ENCODE measurements at regions of chr2 and their contacts with region 1.

Region 1: DNA sequence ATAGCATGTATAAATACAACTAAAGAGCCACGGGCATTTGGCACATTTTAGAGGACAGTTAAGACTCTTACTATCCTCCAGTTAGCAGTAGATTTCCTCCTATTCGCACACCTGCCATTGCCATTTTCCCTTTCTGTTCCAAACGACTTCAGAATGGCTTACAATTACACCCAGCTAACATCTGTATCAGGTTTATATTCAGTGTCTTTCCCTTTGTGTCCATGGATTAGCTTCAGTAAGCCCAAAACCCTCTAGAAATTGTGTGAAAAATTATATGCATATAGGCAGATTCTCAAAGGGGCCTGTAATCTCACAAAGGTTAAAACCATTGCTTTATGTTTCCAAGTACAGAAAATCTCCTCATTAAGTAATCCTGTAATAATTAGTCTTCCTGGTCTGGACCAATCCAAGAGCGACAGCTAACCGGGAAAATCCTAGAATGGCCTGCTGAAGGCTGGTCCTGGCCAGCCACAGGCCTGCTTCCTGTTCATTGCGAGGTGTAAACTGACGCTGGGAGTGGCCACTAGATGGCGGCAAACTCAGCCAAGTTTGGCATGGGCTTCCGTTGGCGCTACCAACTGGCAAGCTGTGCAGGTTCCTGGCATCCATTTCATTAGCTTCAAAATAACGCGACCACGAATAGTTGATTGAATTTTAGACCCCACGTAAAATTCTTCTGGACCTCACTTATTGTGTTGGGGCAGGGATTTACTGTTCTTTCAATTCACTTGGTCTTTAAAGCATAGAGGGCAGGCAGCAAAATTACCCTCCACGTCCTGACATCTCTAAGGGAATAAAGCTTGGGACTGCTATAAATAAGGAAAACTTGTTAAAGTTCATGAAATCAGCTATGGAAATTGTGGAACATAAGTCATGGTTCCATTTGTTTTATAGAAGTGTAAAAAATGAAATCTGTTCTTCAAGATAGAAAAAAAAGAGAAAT is 17.1 kb downstream of the ARHGAP25 start:
- DNase-seq: peak; percentile 98
- H3K4me3 Mint-ChIP-seq: peak overlapping the region; percentile 28
- H3K27ac Mint-ChIP-seq: peak overlapping the region; percentile 93
- H3K4me1 Mint-ChIP-seq: peaks cover 87% of the 10 kb centered on the region
- H3K27me3 Mint-ChIP-seq: no peaks in the 10 kb centered on the region

Region 2: DNA sequence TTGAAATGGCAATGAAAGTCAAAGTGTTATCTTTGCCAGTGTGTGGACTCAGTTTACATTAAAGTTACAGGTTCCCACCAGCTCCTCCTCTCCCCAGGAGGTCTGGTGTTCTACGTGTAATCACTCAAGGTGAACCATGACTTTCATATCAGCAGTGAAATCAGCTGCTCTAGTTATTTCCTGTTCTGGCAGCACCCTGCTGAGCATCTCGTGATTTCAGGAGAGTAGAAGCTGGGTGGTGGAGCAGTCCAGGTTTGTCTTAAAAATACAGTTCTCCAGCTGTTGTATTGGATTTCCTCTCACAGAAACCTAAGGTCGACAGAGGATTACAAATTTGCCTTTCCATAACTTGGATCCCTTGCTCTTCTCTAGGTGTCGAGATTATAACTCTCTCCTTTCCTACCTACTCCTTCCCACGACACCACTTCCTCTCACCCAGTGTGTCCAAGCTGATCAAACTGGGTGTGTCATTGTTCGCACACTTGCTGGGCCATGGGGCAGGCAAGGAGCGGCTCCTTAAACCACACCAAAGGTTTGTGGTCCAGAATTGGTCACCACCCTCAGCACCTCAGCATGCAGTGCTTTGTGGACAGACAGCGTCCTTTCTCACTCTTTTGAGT is 30.1 kb before region 1 on chr2:
- CTCF ChIA-PET with region 1: interaction called, 43 read pairs
- intact Hi-C with region 1: no loop called
- DNase-seq: peak; percentile 62
- H3K4me3 Mint-ChIP-seq: peak overlapping the region; percentile 52
- H3K27ac Mint-ChIP-seq: peak overlapping the region; percentile 87
- H3K4me1 Mint-ChIP-seq: peaks cover 82% of the 10 kb centered on the region
- H3K27me3 Mint-ChIP-seq: no peaks in the 10 kb centered on the region

Region 3: DNA sequence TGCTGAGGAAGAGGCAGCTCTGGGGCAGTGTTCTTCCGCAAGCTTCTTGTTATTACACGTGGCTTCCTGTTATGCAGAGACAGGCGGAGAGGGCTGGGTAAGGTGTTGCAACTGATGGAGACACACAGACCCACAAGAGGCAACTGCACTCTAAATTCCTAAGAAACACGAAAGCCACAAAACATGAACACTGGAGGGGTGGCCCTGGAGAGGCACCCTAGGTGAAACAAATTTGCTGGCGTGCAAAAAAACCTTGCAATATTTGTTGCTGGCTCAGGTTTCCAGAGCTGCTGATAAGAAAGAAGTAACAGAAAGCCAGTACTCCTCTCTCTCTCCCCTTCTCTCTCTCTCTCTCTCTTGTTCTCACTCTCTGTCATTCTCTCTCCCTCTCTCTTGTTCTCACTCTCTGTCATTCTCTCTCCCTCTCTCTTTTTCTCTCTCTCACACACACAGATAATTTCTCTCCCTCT is 14.7 kb after region 1 on chr2:
- CTCF ChIA-PET with region 1: interaction called, 69 read pairs
- intact Hi-C with region 1: loop called (anchors 1 kb)
- DNase-seq: peak; percentile 77
- H3K4me3 Mint-ChIP-seq: peak overlapping the region; percentile 77
- H3K27ac Mint-ChIP-seq: peak overlapping the region; percentile 95
- H3K4me1 Mint-ChIP-seq: peaks cover 97% of the 10 kb centered on the region
- H3K27me3 Mint-ChIP-seq: no peaks in the 10 kb centered on the region

Region 4: GRCh38 chr2:68774569-68775271 is 23.1 kb after region 1 on chr2:
- CTCF ChIA-PET with region 1: interaction called, 69 read pairs
- intact Hi-C with region 1: loop called (anchors 1 kb)
- DNase-seq: peak; percentile 76
- H3K4me3 Mint-ChIP-seq: peak overlapping the region; percentile 68
- H3K27ac Mint-ChIP-seq: peak overlapping the region; percentile 87
- H3K4me1 Mint-ChIP-seq: peaks cover 83% of the 10 kb centered on the region
- H3K27me3 Mint-ChIP-seq: no peaks in the 10 kb centered on the region

Region 5: GRCh38 chr2:68828887-68829708 is 77.4 kb after region 1 on chr2:
- CTCF ChIA-PET with region 1: interaction called, 82 read pairs
- intact Hi-C with region 1: loop called (anchors 1 kb)
- DNase-seq: peak; percentile 85
- H3K4me3 Mint-ChIP-seq: peak overlapping the region; percentile 22
- H3K27ac Mint-ChIP-seq: peak overlapping the region; percentile 77
- H3K4me1 Mint-ChIP-seq: peaks cover 60% of the 10 kb centered on the region
- H3K27me3 Mint-ChIP-seq: no peaks in the 10 kb centered on the region

Region 6: GRCh38 chr2:68837164-68837860 is 85.6 kb after region 1 on chr2:
- CTCF ChIA-PET with region 1: interaction called, 82 read pairs
- intact Hi-C with region 1: loop called (anchors 1 kb)
- DNase-seq: peak; percentile 85
- H3K4me3 Mint-ChIP-seq: no peak overlapping the region
- H3K27ac Mint-ChIP-seq: peak overlapping the region; percentile 61
- H3K4me1 Mint-ChIP-seq: peaks cover 34% of the 10 kb centered on the region
- H3K27me3 Mint-ChIP-seq: no peaks in the 10 kb centered on the region

Region 7: DNA sequence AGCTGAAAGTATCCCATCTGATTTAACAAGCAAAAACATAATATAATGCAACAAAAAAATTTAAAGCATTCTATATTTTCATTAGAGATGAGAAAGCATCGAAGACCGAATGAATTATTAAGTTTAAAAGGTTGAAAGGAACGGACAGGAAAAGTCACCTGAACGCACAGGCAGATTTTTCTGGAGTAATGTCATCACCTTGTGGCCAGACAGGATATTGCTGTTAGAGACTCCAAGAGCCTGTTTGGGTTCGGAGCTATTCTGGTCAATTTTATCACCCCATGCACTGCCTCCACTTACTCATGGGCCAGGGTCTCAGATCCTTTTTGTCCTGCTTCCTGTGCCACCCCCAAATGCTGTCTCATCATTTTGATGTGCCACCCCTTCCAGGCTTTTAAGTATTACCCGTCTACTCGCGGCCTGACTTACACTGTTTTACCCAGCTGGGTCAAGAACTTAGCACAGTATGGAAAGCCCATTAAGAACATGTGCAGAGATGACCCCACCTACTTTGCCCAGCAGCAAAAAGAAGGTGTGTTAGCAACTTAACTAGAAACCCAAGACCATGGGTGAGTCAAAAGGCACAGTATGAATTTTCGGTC is 173.7 kb after region 1 on chr2:
- CTCF ChIA-PET with region 1: interaction called, 12 read pairs
- intact Hi-C with region 1: loop called (anchors 1 kb)
- DNase-seq: peak; percentile 76
- H3K4me3 Mint-ChIP-seq: no peak overlapping the region
- H3K27ac Mint-ChIP-seq: no peak overlapping the region
- H3K4me1 Mint-ChIP-seq: no peaks in the 10 kb centered on the region
- H3K27me3 Mint-ChIP-seq: peaks cover 4% of the 10 kb centered on the region